B cell (primary cell): ENCODE measurements at regions of chr9 and their contacts with region 1.

Region 1: DNA sequence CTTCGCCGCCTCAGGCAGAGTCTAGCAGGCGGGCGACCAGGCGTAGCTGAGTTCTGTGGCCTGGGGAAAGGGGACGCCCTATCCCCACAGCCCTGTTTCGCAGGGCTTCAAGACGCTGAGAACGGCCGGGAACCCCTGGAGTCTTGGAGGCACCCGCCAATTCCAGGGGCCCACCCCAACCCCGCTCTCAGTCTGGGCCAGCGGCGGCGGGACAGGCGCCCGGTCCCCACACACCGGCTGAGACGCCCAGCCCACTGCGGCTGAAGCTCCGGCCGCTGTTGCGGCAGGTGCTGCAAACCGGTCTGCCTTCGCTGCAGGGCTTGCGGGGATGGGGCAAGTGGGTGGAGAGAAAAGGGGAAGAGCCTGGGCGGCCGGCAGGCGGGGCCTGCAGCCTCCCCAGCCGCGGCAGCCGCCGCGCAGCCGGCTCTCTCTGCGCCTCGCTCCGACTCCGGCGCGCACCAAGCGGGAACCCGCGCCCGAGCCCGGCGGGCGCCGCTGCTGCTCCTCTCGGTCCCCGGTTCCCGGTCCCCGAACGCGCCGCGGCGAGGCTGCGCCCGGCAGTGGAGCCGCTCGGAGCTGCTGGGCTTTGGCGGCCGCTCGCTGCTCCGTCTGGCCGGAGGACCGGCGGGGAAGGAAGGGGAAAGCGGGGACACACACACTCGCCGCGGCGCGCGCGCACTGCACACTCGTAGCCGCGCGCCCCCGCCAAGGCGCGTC is at the start of gene PIP5K1B:
- DNase-seq: peak; percentile 90
- ATAC-seq: peak; percentile 88
- H3K4me3 ChIP-seq: peak within 1 kb of the TSS; percentile 78 to 88 (median 83)
- H3K4me3 Mint-ChIP-seq: peak within 1 kb of the TSS; percentile 87
- H3K27ac ChIP-seq: peak within 1 kb of the TSS; percentile 56 to 66
- H3K27ac Mint-ChIP-seq: peak within 1 kb of the TSS; percentile 98
- H3K4me1 ChIP-seq: peaks cover 42 to 43% of the 10 kb centered on the region in 2 donors
- H3K4me1 Mint-ChIP-seq: peaks cover 50% of the 10 kb centered on the region
- H3K27me3 ChIP-seq: no peaks in the 10 kb centered on the region
- H3K27me3 Mint-ChIP-seq: no peaks in the 10 kb centered on the region
- CTCF ChIP-seq: no peak
- total RNA-seq, gene PIP5K1B: 24.1 and 28.2 TPM in 2 replicates

Region 2: DNA sequence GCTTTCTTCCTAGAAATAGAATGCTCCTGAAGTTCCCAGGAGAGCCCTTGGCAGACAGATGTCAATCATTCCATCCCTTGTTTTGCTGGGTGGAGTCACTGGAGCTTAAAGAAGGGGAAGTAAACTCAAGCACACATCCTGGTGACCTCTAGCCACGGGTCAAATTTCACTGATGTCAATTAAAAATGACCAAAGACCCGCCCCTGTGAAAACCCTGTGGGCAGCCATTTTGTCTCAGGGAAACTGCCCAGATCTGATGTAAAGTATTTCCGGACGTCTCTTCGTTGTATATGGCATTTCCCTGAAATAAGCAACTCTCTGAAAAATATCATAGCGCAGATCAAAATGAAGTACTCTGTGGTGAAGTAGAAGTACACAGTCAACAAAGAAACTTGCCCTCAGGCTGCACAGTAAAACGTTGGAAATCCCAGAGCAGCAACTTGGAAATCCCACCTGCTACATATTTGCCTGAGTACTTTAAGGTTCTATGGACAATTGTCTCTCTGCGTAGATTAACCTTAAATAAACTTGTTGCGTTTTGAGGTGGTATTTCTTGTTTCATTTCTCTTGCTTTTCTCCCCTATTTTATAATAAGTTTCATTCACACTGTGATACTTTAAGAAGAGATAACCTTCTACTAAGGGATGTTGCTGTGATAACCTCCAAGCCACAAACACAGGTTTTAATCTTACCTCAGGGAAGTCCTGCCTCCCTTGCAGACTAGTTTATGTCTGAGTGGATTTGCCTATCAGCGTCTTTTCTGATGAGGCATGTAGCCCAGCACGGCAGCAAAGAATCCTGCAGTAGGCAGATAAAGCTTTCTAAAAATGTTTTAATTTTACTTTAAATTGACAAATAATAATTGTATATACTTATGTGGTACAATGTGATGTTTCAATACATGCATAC is 60.8 kb before region 1 on chr9:
- CTCF ChIA-PET with region 1: interaction called, 11 read pairs
- POLR2A ChIA-PET with region 1: interaction called, 13 read pairs
- intact Hi-C with region 1: loop called (anchors 1 kb)
- DNase-seq: peak; percentile 83
- ATAC-seq: peak; percentile 61
- H3K4me3 ChIP-seq: peak overlapping the region in 1 of 5 experiments; percentile 42
- H3K4me3 Mint-ChIP-seq: peak overlapping the region; percentile 70
- H3K27ac ChIP-seq: peak overlapping the region; percentile 91 to 97
- H3K27ac Mint-ChIP-seq: peak overlapping the region; percentile 91
- H3K4me1 ChIP-seq: peaks cover 83 to 91% of the 10 kb centered on the region in 2 donors
- H3K4me1 Mint-ChIP-seq: peaks cover 89% of the 10 kb centered on the region
- H3K27me3 ChIP-seq: no peaks in the 10 kb centered on the region
- H3K27me3 Mint-ChIP-seq: no peaks in the 10 kb centered on the region
- CTCF ChIP-seq: no peak

Region 3: DNA sequence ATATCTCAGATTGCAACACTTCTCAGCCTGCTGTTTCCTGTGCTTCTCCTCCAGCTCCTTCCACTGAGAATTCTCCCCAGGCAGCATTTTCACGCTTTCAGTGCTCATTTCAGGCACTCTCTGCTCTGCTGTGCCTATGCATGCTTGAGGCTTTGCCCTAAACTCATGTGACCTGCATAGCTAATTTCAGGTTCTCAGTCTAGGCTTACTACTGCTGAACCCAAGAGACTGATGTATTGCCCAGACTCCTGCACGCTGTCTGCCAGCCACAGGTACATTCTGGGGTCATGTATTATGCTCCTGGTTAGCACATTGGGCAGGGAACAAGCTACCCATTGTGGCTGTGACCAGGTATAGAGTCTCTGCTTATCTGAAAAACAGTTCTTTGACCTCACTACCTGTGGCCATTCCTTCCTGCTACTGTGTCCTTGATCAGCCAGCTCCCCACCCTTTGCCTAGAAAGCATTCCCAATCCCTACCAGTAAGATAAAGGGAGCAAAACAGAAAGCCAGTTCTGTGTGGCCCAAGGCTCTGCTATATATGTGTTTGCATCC is 34.7 kb after region 1 on chr9:
- CTCF ChIA-PET with region 1: interaction called, 4 read pairs
- POLR2A ChIA-PET with region 1: no interaction called
- intact Hi-C with region 1: loop called (anchors 5 kb)
- DNase-seq: no peak
- ATAC-seq: no peak
- H3K4me3 ChIP-seq: no peak overlapping the region
- H3K4me3 Mint-ChIP-seq: no peak overlapping the region
- H3K27ac ChIP-seq: no peak overlapping the region
- H3K27ac Mint-ChIP-seq: no peak overlapping the region
- H3K4me1 ChIP-seq: peaks cover 0 to 6% of the 10 kb centered on the region in 2 donors
- H3K4me1 Mint-ChIP-seq: peaks cover 26% of the 10 kb centered on the region
- H3K27me3 ChIP-seq: no peaks in the 10 kb centered on the region
- H3K27me3 Mint-ChIP-seq: no peaks in the 10 kb centered on the region
- CTCF ChIP-seq: no peak

Region 4: GRCh38 chr9:68844631-68845612 is 139.9 kb after region 1 on chr9:
- CTCF ChIA-PET with region 1: interaction called, 10 read pairs
- POLR2A ChIA-PET with region 1: no interaction called
- intact Hi-C with region 1: loop called (anchors 1 kb)
- DNase-seq: peak; percentile 55
- ATAC-seq: peak; percentile 53
- H3K4me3 ChIP-seq: no peak overlapping the region
- H3K4me3 Mint-ChIP-seq: no peak overlapping the region
- H3K27ac ChIP-seq: no peak overlapping the region
- H3K27ac Mint-ChIP-seq: no peak overlapping the region
- H3K4me1 ChIP-seq: peaks cover 9 to 12% of the 10 kb centered on the region in 2 donors
- H3K4me1 Mint-ChIP-seq: peaks cover 27% of the 10 kb centered on the region
- H3K27me3 ChIP-seq: no peaks in the 10 kb centered on the region
- H3K27me3 Mint-ChIP-seq: no peaks in the 10 kb centered on the region
- CTCF ChIP-seq: peak; percentile 58

Region 5: DNA sequence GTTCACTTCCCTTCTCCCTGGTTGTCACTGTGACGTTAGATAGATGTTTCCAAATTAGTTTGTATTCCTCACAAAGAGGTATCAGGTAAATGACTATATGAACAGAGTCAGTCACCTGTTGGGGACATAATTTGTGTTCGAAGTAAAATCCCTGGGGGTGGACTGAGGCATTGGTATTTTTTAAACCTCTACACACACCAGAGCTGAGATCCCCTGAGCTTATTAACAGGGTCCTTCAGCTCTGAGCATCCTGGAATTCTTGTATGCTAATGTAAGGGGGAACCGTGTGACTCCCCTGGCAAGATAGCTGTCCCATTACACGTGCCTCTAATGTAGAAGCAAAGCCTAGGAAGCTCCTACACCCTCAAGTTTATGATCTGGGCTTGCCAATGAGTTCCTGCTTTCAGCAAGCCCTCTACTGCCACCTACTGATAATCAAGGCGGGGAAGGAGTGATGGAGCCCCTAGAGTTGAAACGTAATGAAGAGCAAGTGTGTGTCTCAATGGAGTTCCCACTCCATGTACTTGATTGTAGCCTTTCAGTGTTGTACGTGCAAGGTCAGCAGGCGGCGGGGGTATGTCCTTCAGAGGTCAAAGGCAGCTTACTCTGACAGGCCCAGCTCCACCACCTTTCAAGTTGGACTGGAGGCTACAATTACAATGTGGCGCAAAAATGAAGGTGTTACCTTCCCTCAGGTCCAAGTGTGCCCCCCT is 294.6 kb after region 1 on chr9:
- CTCF ChIA-PET with region 1: interaction called, 5 read pairs
- POLR2A ChIA-PET with region 1: no interaction called
- intact Hi-C with region 1: loop called (anchors 5 kb)
- DNase-seq: peak; percentile 74
- ATAC-seq: peak; percentile 92
- H3K4me3 ChIP-seq: no peak overlapping the region
- H3K4me3 Mint-ChIP-seq: no peak overlapping the region
- H3K27ac ChIP-seq: no peak overlapping the region
- H3K27ac Mint-ChIP-seq: peak overlapping the region; percentile 16
- H3K4me1 ChIP-seq: peaks cover 0 to 7% of the 10 kb centered on the region in 2 donors
- H3K4me1 Mint-ChIP-seq: peaks cover 21% of the 10 kb centered on the region
- H3K27me3 ChIP-seq: no peaks in the 10 kb centered on the region
- H3K27me3 Mint-ChIP-seq: no peaks in the 10 kb centered on the region
- CTCF ChIP-seq: peak; percentile 82